MCF 10A (cell line): ENCODE measurements at regions of chr1 and their contacts with region 1.

Region 1: DNA sequence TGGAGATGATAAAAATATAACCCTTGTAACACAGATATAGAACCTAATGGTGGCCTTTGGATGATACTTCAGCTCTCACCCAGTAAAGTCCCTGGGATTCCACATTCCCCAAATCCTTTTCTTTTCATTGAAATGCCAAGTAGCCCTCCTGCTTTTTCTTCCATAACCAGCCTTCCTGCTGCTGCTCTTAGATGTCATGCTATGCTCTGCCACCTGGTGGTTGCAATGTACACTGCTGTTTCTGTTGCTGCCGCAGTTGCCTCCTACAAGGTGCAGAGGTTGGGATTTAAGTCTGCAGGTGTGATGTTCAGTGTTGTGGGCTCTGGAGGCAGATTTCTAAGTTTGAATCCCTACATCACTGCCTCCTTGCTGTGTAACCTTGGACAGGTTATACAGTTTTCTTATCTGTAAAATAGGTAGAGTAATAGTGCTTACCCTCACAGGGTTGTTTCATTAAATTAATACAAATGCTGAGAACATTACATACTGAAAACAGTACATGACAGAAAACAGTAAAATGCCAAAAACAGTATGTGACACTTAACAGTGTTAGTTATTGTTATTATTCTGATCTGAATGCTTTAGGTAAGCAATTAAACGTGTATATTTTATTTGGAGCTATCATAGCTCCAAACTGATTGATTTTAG is 64.3 kb downstream of the CAMSAP2 start:
- DNase-seq: peak; percentile 93
- H3K4me3 Mint-ChIP-seq: no peak overlapping the region
- H3K27ac Mint-ChIP-seq: no peak overlapping the region
- H3K4me1 Mint-ChIP-seq: peaks cover 32% of the 10 kb centered on the region
- H3K27me3 Mint-ChIP-seq: no peaks in the 10 kb centered on the region
- CTCF ChIP-seq: peak; percentile 99

Region 2: GRCh38 chr1:200542162-200542561 is 260.8 kb before region 1 on chr1:
- CTCF ChIA-PET with region 1: no interaction called
- POLR2A ChIA-PET with region 1: no interaction called
- intact Hi-C with region 1: no loop called
- DNase-seq: no peak
- H3K4me3 Mint-ChIP-seq: no peak overlapping the region
- H3K27ac Mint-ChIP-seq: no peak overlapping the region
- H3K4me1 Mint-ChIP-seq: peaks cover 6% of the 10 kb centered on the region
- H3K27me3 Mint-ChIP-seq: no peaks in the 10 kb centered on the region
- CTCF ChIP-seq: no peak

Region 3: DNA sequence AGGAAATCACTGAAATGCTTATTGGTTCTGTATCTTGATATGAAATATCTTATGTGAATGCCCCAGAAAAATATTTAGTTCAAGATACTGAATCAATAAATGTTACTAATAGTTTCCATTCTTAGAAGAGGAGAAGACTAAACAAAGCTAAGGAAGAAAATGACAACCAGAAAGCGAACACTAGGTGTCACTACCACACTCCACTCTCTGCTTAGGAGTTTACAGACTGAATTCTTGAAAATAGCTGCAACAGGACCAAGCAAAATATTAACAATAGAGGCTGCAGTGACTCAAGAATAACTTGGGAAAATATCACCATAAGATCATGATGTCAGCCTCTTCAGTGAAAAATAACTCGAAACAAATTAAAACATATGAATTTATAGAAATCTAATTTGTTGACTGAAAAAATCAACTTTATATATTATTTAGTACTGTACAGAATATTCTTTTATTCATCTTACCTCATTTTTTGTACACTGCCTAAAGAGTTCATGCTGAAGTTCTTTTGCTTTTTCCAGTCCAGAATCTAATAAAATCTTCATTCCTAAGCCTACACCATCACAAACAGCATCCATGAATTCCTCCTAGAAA is 244.0 kb before region 1 on chr1:
- CTCF ChIA-PET with region 1: interaction called, 5 read pairs
- POLR2A ChIA-PET with region 1: interaction called, 8 read pairs
- intact Hi-C with region 1: loop called (anchors 2 kb)
- DNase-seq: peak; percentile 62
- H3K4me3 Mint-ChIP-seq: no peak overlapping the region
- H3K27ac Mint-ChIP-seq: peak overlapping the region; percentile 28
- H3K4me1 Mint-ChIP-seq: peaks cover 6% of the 10 kb centered on the region
- H3K27me3 Mint-ChIP-seq: no peaks in the 10 kb centered on the region
- CTCF ChIP-seq: peak; percentile 81

Region 4: DNA sequence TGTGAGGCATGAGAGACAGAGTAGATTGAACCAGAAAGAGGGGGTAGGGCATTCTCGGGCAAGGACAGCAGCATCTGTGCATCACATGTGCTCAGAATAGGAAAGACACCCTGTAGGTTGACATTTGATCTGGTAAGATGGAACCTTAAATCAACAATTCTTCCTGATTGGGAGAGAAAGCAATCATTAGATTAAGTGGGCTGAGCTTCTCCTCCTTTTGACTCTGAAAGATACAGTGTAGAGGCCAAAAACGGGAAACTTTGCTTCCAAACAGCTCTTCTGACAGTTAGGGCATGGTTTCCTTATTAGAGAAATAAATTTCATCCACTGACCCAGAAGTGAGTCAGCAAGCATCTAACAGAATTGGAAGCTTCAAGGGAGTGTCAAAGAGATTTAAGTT is 192.1 kb before region 1 on chr1:
- CTCF ChIA-PET with region 1: interaction called, 11 read pairs
- POLR2A ChIA-PET with region 1: no interaction called
- intact Hi-C with region 1: no loop called
- DNase-seq: peak; percentile 15
- H3K4me3 Mint-ChIP-seq: no peak overlapping the region
- H3K27ac Mint-ChIP-seq: no peak overlapping the region
- H3K4me1 Mint-ChIP-seq: peaks cover 8% of the 10 kb centered on the region
- H3K27me3 Mint-ChIP-seq: no peaks in the 10 kb centered on the region
- CTCF ChIP-seq: no peak

Region 5: GRCh38 chr1:200628223-200628881 is 174.6 kb before region 1 on chr1:
- CTCF ChIA-PET with region 1: interaction called, 108 read pairs
- POLR2A ChIA-PET with region 1: interaction called, 59 read pairs
- intact Hi-C with region 1: no loop called
- DNase-seq: no peak
- H3K4me3 Mint-ChIP-seq: no peak overlapping the region
- H3K27ac Mint-ChIP-seq: no peak overlapping the region
- H3K4me1 Mint-ChIP-seq: peaks cover 10% of the 10 kb centered on the region
- H3K27me3 Mint-ChIP-seq: no peaks in the 10 kb centered on the region
- CTCF ChIP-seq: no peak

Region 6: GRCh38 chr1:200634261-200635122 is 168.5 kb before region 1 on chr1:
- CTCF ChIA-PET with region 1: interaction called, 39 read pairs
- POLR2A ChIA-PET with region 1: interaction called, 3 read pairs
- intact Hi-C with region 1: no loop called
- DNase-seq: peak; percentile 43
- H3K4me3 Mint-ChIP-seq: no peak overlapping the region
- H3K27ac Mint-ChIP-seq: no peak overlapping the region
- H3K4me1 Mint-ChIP-seq: no peaks in the 10 kb centered on the region
- H3K27me3 Mint-ChIP-seq: no peaks in the 10 kb centered on the region
- CTCF ChIP-seq: peak; percentile 41

Region 7: DNA sequence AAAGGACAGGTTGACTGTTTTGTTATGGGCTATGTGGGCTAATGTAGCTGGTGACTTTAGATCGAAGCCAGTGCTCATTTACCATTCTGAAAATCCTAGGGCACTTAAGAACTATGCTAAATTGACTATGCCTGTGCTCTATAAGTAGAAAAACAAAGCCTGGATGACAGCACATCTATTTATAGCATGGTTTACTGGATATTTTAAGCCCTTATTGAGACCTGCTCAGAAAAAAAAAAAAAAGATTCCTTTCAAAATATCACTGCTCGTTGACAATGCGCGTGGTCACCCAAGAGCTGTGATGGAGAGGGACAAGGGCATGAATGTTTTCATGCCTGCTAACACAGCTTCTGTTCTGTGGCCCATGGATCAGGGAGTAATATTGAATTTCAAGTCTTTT is 16.2 kb before region 1 on chr1:
- CTCF ChIA-PET with region 1: interaction called, 29 read pairs
- POLR2A ChIA-PET with region 1: interaction called, 5 read pairs
- intact Hi-C with region 1: no loop called
- DNase-seq: no peak
- H3K4me3 Mint-ChIP-seq: no peak overlapping the region
- H3K27ac Mint-ChIP-seq: no peak overlapping the region
- H3K4me1 Mint-ChIP-seq: peaks cover 25% of the 10 kb centered on the region
- H3K27me3 Mint-ChIP-seq: no peaks in the 10 kb centered on the region
- CTCF ChIP-seq: no peak

Region 8: DNA sequence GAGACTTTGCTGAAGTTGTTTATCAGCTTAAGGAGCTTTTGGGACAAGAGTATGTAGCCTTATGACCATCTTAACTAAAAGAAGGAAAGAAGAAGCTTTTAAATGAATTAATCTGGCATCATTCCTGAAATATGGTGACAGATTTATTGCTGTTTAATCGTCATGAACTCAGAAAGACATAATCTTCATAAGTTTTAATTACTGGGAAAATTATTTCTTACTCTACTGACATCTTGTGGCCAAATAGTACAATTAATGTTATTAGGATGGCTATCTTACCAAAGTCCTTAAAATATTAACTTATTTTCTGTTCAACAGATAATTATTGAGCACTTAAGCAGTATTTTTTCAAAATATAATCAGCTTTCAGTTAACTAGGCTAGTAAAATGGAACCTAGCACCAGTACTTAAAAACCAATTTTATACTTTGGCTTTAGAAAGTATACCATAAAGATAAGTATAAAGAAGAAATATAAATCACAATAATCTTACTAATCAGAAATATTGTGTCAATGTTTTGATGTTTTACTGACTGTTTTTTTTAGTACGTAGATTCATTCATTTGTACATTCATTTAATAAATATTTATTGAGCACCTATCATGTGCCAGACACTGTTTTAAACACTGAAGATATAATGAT is 35.1 kb after region 1 on chr1:
- CTCF ChIA-PET with region 1: interaction called, 17 read pairs
- POLR2A ChIA-PET with region 1: interaction called, 5 read pairs
- intact Hi-C with region 1: no loop called
- DNase-seq: peak; percentile 45
- H3K4me3 Mint-ChIP-seq: no peak overlapping the region
- H3K27ac Mint-ChIP-seq: no peak overlapping the region
- H3K4me1 Mint-ChIP-seq: peaks cover 16% of the 10 kb centered on the region
- H3K27me3 Mint-ChIP-seq: no peaks in the 10 kb centered on the region
- CTCF ChIP-seq: peak; percentile 67

Region 9: GRCh38 chr1:200890818-200891773 is 88.1 kb after region 1 on chr1:
- CTCF ChIA-PET with region 1: no interaction called
- POLR2A ChIA-PET with region 1: no interaction called
- intact Hi-C with region 1: no loop called
- DNase-seq: peak; percentile 81
- H3K4me3 Mint-ChIP-seq: peak overlapping the region; percentile 80
- H3K27ac Mint-ChIP-seq: peak overlapping the region; percentile 83
- H3K4me1 Mint-ChIP-seq: peaks cover 59% of the 10 kb centered on the region
- H3K27me3 Mint-ChIP-seq: no peaks in the 10 kb centered on the region
- CTCF ChIP-seq: peak; percentile 61

Region 10: GRCh38 chr1:201282931-201283829 is 480.2 kb after region 1 on chr1 and contains the start of gene PKP1:
- CTCF ChIA-PET with region 1: no interaction called
- POLR2A ChIA-PET with region 1: no interaction called
- intact Hi-C with region 1: no loop called
- DNase-seq: no peak
- H3K4me3 Mint-ChIP-seq: no peak within 1 kb of the TSS
- H3K27ac Mint-ChIP-seq: peak within 1 kb of the TSS; percentile 40
- H3K4me1 Mint-ChIP-seq: peaks cover 22% of the 10 kb centered on the region
- H3K27me3 Mint-ChIP-seq: no peaks in the 10 kb centered on the region
- CTCF ChIP-seq: no peak
- total RNA-seq, gene PKP1: 0.30 and 0.32 TPM in 2 replicates

Region 11: GRCh38 chr1:201709564-201710295 is 906.7 kb after region 1 on chr1:
- CTCF ChIA-PET with region 1: no interaction called
- POLR2A ChIA-PET with region 1: no interaction called
- intact Hi-C with region 1: no loop called
- DNase-seq: peak; percentile 87
- H3K4me3 Mint-ChIP-seq: no peak overlapping the region
- H3K27ac Mint-ChIP-seq: no peak overlapping the region
- H3K4me1 Mint-ChIP-seq: peaks cover 52% of the 10 kb centered on the region
- H3K27me3 Mint-ChIP-seq: no peaks in the 10 kb centered on the region
- CTCF ChIP-seq: peak; percentile 100